Activated CD4-positive, alpha-beta T cell treated with anti-CD3 and anti-CD28 coated beads for 36 hours (primary cell): ENCODE measurements at regions of chr2 and their contacts with region 1.

Region 1: DNA sequence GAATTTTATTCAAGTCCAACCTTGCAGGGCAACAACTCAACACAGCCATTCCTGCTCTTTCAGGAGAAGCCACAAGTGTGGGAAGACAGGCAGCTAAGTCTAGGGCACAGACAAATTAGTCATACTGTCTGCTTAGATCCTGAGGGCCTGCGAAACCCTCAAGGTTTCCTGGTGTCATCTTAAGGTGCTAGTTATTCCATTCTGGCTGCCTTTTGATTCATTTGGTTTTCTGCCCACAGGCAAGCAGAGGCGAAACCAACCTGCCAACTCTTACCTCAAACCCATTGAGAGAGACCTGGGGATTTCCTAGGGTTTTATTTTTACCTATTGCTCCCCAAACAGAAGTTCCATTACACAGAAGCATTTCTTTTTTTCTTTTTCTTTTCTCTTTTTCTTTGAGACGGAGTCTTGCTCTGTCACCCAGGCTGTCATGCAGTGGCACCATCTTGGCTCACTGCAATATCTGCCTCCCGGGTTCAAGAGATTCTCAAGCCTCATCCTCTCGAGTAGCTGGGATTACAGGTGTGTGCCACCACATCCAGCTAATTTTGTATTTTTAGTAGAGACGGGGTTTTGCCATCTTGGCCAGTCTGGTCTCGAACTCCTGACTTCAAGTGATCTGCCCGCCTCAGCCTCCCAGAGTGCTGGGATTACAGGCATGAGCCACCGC is 23.7 kb upstream of the SCYGR1 start:
- DNase-seq: peak; percentile 80
- ATAC-seq: peak; percentile 87
- H3K4me3 Mint-ChIP-seq: peak overlapping the region; percentile 12
- H3K27ac Mint-ChIP-seq: peak overlapping the region; percentile 92
- H3K4me1 Mint-ChIP-seq: peaks cover 66% of the 10 kb centered on the region
- H3K27me3 Mint-ChIP-seq: no peaks in the 10 kb centered on the region

Region 2: GRCh38 chr2:227374158-227374557 is 37.3 kb before region 1 on chr2:
- CTCF ChIA-PET with region 1: interaction called, 3 read pairs
- POLR2A ChIA-PET with region 1: interaction called, 4 read pairs
- intact Hi-C with region 1: loop called (anchors 1 kb)
- DNase-seq: peak; percentile 76
- ATAC-seq: peak; percentile 89
- H3K4me3 Mint-ChIP-seq: no peak overlapping the region
- H3K27ac Mint-ChIP-seq: peak overlapping the region; percentile 59
- H3K4me1 Mint-ChIP-seq: peaks cover 26% of the 10 kb centered on the region
- H3K27me3 Mint-ChIP-seq: peaks cover 2% of the 10 kb centered on the region

Region 3: DNA sequence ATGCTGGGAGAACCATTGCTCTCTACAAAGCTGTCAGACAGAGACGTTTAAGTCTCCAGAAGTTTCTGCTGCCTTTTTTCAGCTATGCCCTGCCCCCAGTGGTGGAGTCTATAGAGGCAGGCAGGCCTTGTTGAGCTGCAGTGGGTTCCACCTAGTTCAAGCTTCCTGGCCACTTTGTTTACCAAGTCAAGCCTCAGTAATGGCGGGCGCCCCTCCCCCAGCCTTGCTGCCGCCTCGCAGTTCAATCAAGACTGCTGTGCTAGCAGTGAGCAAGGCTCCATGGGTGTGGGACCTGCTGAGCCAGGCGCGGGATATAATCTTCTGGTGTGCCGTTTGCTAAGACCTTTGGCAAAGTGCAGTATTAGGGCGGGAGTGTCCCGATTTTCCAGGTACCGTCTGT is 134.5 kb after region 1 on chr2:
- CTCF ChIA-PET with region 1: no interaction called
- POLR2A ChIA-PET with region 1: no interaction called
- intact Hi-C with region 1: no loop called
- DNase-seq: peak; percentile 48
- ATAC-seq: no peak
- H3K4me3 Mint-ChIP-seq: no peak overlapping the region
- H3K27ac Mint-ChIP-seq: no peak overlapping the region
- H3K4me1 Mint-ChIP-seq: peaks cover 12% of the 10 kb centered on the region
- H3K27me3 Mint-ChIP-seq: no peaks in the 10 kb centered on the region

Region 4: DNA sequence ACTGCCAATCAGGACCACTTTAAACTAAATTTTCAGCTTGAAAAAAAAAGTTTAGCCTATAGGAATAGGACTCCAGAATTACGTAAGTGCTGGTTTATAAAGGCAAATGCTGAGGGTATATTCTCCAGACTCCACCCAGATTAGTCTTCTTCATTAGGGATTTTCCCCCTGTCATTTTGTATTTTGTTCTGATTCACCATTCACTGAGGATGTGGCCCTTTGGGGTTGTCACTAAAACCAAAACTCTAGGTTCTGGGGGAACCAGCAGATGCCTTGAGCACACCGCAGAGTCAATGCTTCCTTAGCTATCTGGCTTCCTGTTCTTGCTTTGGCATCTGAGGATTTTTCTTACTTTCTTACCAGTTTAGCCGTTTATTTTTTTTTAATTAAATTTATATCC is 216.3 kb after region 1 on chr2:
- CTCF ChIA-PET with region 1: no interaction called
- POLR2A ChIA-PET with region 1: no interaction called
- intact Hi-C with region 1: no loop called
- DNase-seq: peak; percentile 36
- ATAC-seq: peak; percentile 96
- H3K4me3 Mint-ChIP-seq: no peak overlapping the region
- H3K27ac Mint-ChIP-seq: no peak overlapping the region
- H3K4me1 Mint-ChIP-seq: peaks cover 2% of the 10 kb centered on the region
- H3K27me3 Mint-ChIP-seq: peaks cover 18% of the 10 kb centered on the region